Activated CD4-positive, alpha-beta memory T cell treated with anti-CD3 and anti-CD28 coated beads for 36 hours (primary cell): ENCODE measurements at regions of chr6 and their contacts with region 1.

Region 1: DNA sequence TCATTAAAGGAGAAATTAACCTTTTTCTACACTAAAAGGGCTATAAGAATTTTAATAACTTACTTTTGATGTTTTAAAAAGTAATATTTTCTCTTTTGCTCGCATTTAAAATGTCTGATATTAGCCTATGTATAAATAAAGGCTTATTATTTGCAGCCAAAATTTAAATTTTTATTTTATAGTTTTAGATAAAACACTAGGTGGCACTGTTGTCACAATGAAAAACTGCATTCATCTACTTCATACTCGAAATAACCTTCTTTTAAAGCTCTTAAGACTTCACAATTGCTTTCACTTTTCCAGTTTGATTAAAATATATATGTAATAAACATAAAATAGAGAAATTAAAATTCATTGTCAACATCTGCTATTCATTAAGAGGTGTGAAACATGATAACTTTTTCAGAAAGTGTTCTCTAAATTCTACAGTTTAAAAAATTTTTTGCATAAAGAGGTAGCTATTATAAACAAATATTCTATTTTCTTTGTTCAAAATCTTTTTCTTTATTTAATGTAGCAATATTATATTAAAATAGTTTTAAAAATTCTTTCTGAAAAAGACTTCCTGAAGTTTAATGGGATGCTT is 78.8 kb upstream of the DEFB112 start:
- DNase-seq: no peak
- H3K4me3 Mint-ChIP-seq: no peak overlapping the region
- H3K27ac Mint-ChIP-seq: no peak overlapping the region
- H3K4me1 Mint-ChIP-seq: no peaks in the 10 kb centered on the region
- H3K27me3 Mint-ChIP-seq: no peaks in the 10 kb centered on the region

Region 2: DNA sequence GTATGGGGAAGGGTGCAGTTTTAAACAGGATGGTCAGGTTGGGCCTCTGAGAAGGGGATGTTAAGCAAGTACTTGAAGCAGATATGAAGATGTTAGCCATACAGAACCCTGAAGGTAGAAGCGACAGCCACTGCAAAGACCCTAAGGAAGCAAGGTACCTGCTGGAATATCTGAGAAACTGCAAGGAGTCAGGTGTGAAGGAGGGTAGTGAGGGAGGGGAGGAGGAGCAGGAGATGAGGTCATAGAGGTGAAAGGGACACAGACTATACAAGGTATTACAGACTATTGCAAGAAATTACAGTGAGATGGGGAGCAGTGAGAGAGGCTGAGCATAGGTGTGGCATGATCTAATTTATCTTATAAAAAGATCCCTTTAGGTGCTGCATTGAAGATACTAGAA is 56.6 kb before region 1 on chr6:
- CTCF ChIA-PET with region 1: no interaction called
- POLR2A ChIA-PET with region 1: no interaction called
- intact Hi-C with region 1: no loop called
- DNase-seq: no peak
- H3K4me3 Mint-ChIP-seq: no peak overlapping the region
- H3K27ac Mint-ChIP-seq: no peak overlapping the region
- H3K4me1 Mint-ChIP-seq: no peaks in the 10 kb centered on the region
- H3K27me3 Mint-ChIP-seq: no peaks in the 10 kb centered on the region

Region 3: GRCh38 chr6:50602292-50602691 is 473.8 kb after region 1 on chr6:
- CTCF ChIA-PET with region 1: no interaction called
- POLR2A ChIA-PET with region 1: no interaction called
- intact Hi-C with region 1: loop called (anchors 1 kb)
- DNase-seq: no peak
- H3K4me3 Mint-ChIP-seq: no peak overlapping the region
- H3K27ac Mint-ChIP-seq: no peak overlapping the region
- H3K4me1 Mint-ChIP-seq: no peaks in the 10 kb centered on the region
- H3K27me3 Mint-ChIP-seq: no peaks in the 10 kb centered on the region

Region 4: GRCh38 chr6:50791900-50792508 is 663.5 kb after region 1 on chr6:
- CTCF ChIA-PET with region 1: interaction called, 3 read pairs
- POLR2A ChIA-PET with region 1: no interaction called
- intact Hi-C with region 1: loop called (anchors 2 kb)
- DNase-seq: no peak
- H3K4me3 Mint-ChIP-seq: no peak overlapping the region
- H3K27ac Mint-ChIP-seq: no peak overlapping the region
- H3K4me1 Mint-ChIP-seq: no peaks in the 10 kb centered on the region
- H3K27me3 Mint-ChIP-seq: no peaks in the 10 kb centered on the region

Region 5: DNA sequence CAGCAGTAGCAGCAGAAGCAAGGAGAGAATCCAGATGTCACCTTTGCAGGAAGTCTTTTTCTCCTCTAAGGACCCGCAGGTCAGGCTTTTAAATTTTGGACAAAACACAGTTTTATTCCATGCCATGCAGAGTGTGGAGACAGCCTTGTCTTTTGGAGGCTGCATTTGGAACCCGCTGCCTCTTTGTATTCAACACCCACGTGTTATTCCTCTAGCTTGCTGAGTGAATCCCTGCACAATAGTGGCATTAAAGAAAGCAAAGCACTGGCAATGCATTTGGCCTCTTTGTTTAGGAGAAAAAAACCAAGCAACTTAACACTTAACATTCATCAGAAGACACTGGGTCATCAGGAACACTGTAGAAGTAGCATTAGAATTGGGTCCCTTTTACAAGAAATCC is 733.7 kb after region 1 on chr6:
- CTCF ChIA-PET with region 1: no interaction called
- POLR2A ChIA-PET with region 1: no interaction called
- intact Hi-C with region 1: no loop called
- DNase-seq: no peak
- H3K4me3 Mint-ChIP-seq: no peak overlapping the region
- H3K27ac Mint-ChIP-seq: no peak overlapping the region
- H3K4me1 Mint-ChIP-seq: no peaks in the 10 kb centered on the region
- H3K27me3 Mint-ChIP-seq: no peaks in the 10 kb centered on the region